Body of pancreas (tissue), 4 donors: ENCODE measurements at regions of chr7 and their contacts with region 1.

Region 1: GRCh38 chr7:79176859-79177477 is 276.5 kb downstream of the MAGI2 start:
- DNase-seq: peak in 1 of 4 donors; percentile 23
- ATAC-seq: peak; percentile 62
- H3K4me3 ChIP-seq: no peak overlapping the region
- H3K27ac ChIP-seq: no peak overlapping the region
- H3K4me1 ChIP-seq: no peaks in the 10 kb centered on the region
- H3K27me3 ChIP-seq: no peaks in the 10 kb centered on the region
- CTCF ChIP-seq: peak; percentile 24 to 60 (median 52)
- POLR2A ChIP-seq: no peak

Region 2: DNA sequence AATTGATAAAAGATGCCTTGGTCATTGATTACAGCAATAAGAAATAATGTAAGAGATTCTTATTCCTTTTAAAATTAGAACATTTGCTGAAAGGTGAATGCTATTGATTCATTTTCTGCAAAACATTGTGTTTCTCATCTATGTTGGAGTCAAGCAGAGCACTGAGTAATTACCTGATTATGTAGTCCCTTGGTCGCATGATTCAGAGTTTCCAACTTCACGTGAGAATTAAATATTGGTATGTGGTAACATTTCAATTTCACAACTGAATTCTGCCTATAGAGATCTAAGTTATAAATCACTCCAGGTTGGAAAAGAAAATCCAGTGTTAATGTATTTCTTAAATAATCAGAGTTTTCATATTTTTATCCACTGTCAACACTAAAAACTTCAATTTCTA is 677.0 kb before region 1 on chr7:
- intact Hi-C with region 1: loop called (anchors 10 kb)
- DNase-seq: no peak
- ATAC-seq: no peak
- H3K4me3 ChIP-seq: no peak overlapping the region
- H3K27ac ChIP-seq: no peak overlapping the region
- H3K4me1 ChIP-seq: no peaks in the 10 kb centered on the region
- H3K27me3 ChIP-seq: no peaks in the 10 kb centered on the region
- CTCF ChIP-seq: no peak
- POLR2A ChIP-seq: no peak

Region 3: GRCh38 chr7:78959477-78959876 is 217.5 kb before region 1 on chr7:
- intact Hi-C with region 1: no loop called
- DNase-seq: no peak
- ATAC-seq: no peak
- H3K4me3 ChIP-seq: no peak overlapping the region
- H3K27ac ChIP-seq: no peak overlapping the region
- H3K4me1 ChIP-seq: no peaks in the 10 kb centered on the region
- H3K27me3 ChIP-seq: no peaks in the 10 kb centered on the region
- CTCF ChIP-seq: no peak
- POLR2A ChIP-seq: no peak

Region 4: GRCh38 chr7:80922196-80922595 is 1745.2 kb after region 1 on chr7:
- intact Hi-C with region 1: no loop called
- DNase-seq: peak in 3 of 4 donors; percentile 20 to 42 (median 27)
- ATAC-seq: no peak
- H3K4me3 ChIP-seq: no peak overlapping the region
- H3K27ac ChIP-seq: no peak overlapping the region
- H3K4me1 ChIP-seq: peaks cover 16% of the 10 kb centered on the region
- H3K27me3 ChIP-seq: no peaks in the 10 kb centered on the region
- CTCF ChIP-seq: no peak
- POLR2A ChIP-seq: no peak